Endothelial cell of umbilical vein (primary cell): ENCODE measurements at regions of chr4 and their contacts with region 1.

Region 1: GRCh38 chr4:7843831-7844593 is 95.6 kb downstream of the AFAP1 start:
- DNase-seq: peak; percentile 91
- H3K4me3 ChIP-seq: peak overlapping the region in 1 of 3 experiments; percentile 24
- H3K27ac ChIP-seq: peak overlapping the region; percentile 98
- H3K4me1 ChIP-seq: peaks cover 60% of the 10 kb centered on the region
- H3K27me3 ChIP-seq: no peaks in the 10 kb centered on the region
- CTCF ChIP-seq: peak; percentile 80 to 86
- POLR2A ChIP-seq: no peak

Region 2: GRCh38 chr4:7358100-7358735 is 485.8 kb before region 1 on chr4:
- CTCF ChIA-PET with region 1: no interaction called
- POLR2A ChIA-PET with region 1: no interaction called
- dilution Hi-C with region 1: no loop called
- intact Hi-C with region 1: no loop called
- DNase-seq: peak; percentile 30
- H3K4me3 ChIP-seq: no peak overlapping the region
- H3K27ac ChIP-seq: no peak overlapping the region
- H3K4me1 ChIP-seq: no peaks in the 10 kb centered on the region
- H3K27me3 ChIP-seq: no peaks in the 10 kb centered on the region
- CTCF ChIP-seq: no peak
- POLR2A ChIP-seq: no peak

Region 3: DNA sequence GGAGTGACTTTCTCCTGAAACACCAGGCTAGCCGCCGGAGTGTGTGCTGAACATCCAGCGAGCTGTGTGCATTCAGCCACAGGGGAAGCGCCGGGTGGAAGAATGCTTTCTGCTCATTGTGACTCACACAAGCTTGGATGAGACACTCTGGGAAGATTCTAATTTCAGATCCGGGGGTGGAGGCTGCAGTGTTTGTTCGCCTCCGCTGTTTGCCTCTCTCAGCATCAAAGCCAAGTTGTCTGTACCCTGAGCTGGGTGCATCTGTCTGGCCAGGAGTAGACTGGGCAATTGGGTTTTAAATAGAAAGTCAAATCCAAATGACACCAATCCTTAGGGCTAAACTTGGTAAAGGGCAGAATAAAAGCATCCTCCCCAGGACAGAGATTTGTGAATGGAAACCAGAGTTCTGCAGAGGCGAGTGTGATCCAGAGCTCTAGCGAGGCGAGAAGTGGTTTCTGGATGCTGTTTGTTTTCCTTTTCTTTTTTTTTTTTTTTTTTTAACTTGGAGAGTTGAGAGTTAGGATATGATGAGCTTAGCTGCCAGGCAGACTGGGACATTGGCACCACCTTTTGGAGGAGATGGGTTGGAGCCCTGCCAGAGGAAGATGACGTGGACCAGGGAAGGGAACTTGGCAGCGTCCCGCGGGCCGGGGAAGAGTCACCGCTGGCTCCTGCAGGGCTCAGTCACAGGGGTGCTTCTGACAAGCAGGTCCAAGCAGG is 213.3 kb before region 1 on chr4:
- CTCF ChIA-PET with region 1: no interaction called
- POLR2A ChIA-PET with region 1: no interaction called
- dilution Hi-C with region 1: no loop called
- intact Hi-C with region 1: no loop called
- DNase-seq: no peak
- H3K4me3 ChIP-seq: no peak overlapping the region
- H3K27ac ChIP-seq: peak overlapping the region; percentile 48
- H3K4me1 ChIP-seq: peaks cover 23% of the 10 kb centered on the region
- H3K27me3 ChIP-seq: peaks cover 2 to 5% of the 10 kb centered on the region in 2 experiments
- CTCF ChIP-seq: no peak
- POLR2A ChIP-seq: no peak

Region 4: GRCh38 chr4:7827991-7828720 is 15.9 kb before region 1 on chr4:
- CTCF ChIA-PET with region 1: interaction called, 11 read pairs
- POLR2A ChIA-PET with region 1: interaction called, 5 read pairs
- dilution Hi-C with region 1: no loop called
- intact Hi-C with region 1: loop called (anchors 1 kb)
- DNase-seq: peak; percentile 96
- H3K4me3 ChIP-seq: no peak overlapping the region
- H3K27ac ChIP-seq: peak overlapping the region; percentile 88
- H3K4me1 ChIP-seq: peaks cover 74% of the 10 kb centered on the region
- H3K27me3 ChIP-seq: no peaks in the 10 kb centered on the region
- CTCF ChIP-seq: no peak
- POLR2A ChIP-seq: no peak

Region 5: GRCh38 chr4:7876201-7876875 is 32.3 kb after region 1 on chr4:
- CTCF ChIA-PET with region 1: interaction called, 4 read pairs
- POLR2A ChIA-PET with region 1: interaction called, 4 read pairs
- dilution Hi-C with region 1: no loop called
- intact Hi-C with region 1: loop called (anchors 1 kb)
- DNase-seq: peak; percentile 75
- H3K4me3 ChIP-seq: no peak overlapping the region
- H3K27ac ChIP-seq: peak overlapping the region; percentile 30
- H3K4me1 ChIP-seq: peaks cover 55% of the 10 kb centered on the region
- H3K27me3 ChIP-seq: no peaks in the 10 kb centered on the region
- CTCF ChIP-seq: peak; percentile 44 to 57
- POLR2A ChIP-seq: peak; percentile 34

Region 6: GRCh38 chr4:7910263-7910896 is 66.4 kb after region 1 on chr4:
- CTCF ChIA-PET with region 1: interaction called, 16 read pairs
- POLR2A ChIA-PET with region 1: no interaction called
- dilution Hi-C with region 1: no loop called
- intact Hi-C with region 1: no loop called
- DNase-seq: no peak
- H3K4me3 ChIP-seq: no peak overlapping the region
- H3K27ac ChIP-seq: peak overlapping the region; percentile 49
- H3K4me1 ChIP-seq: peaks cover 70% of the 10 kb centered on the region
- H3K27me3 ChIP-seq: no peaks in the 10 kb centered on the region
- CTCF ChIP-seq: no peak
- POLR2A ChIP-seq: peak; percentile 21

Region 7: GRCh38 chr4:7967501-7968261 is 123.7 kb after region 1 on chr4:
- CTCF ChIA-PET with region 1: interaction called, 13 read pairs
- POLR2A ChIA-PET with region 1: no interaction called
- dilution Hi-C with region 1: no loop called
- intact Hi-C with region 1: loop called (anchors 1 kb)
- DNase-seq: peak; percentile 74
- H3K4me3 ChIP-seq: no peak overlapping the region
- H3K27ac ChIP-seq: peak overlapping the region; percentile 89
- H3K4me1 ChIP-seq: peaks cover 48% of the 10 kb centered on the region
- H3K27me3 ChIP-seq: no peaks in the 10 kb centered on the region
- CTCF ChIP-seq: no peak
- POLR2A ChIP-seq: no peak

Region 8: GRCh38 chr4:8289956-8290700 is 446.1 kb after region 1 on chr4:
- CTCF ChIA-PET with region 1: no interaction called
- POLR2A ChIA-PET with region 1: no interaction called
- dilution Hi-C with region 1: no loop called
- intact Hi-C with region 1: no loop called
- DNase-seq: no peak
- H3K4me3 ChIP-seq: no peak overlapping the region
- H3K27ac ChIP-seq: no peak overlapping the region
- H3K4me1 ChIP-seq: no peaks in the 10 kb centered on the region
- H3K27me3 ChIP-seq: no peaks in the 10 kb centered on the region
- CTCF ChIP-seq: no peak
- POLR2A ChIP-seq: no peak